ENCODE measurements at regions of chr1 and their contacts with region 1.

Region 1: DNA sequence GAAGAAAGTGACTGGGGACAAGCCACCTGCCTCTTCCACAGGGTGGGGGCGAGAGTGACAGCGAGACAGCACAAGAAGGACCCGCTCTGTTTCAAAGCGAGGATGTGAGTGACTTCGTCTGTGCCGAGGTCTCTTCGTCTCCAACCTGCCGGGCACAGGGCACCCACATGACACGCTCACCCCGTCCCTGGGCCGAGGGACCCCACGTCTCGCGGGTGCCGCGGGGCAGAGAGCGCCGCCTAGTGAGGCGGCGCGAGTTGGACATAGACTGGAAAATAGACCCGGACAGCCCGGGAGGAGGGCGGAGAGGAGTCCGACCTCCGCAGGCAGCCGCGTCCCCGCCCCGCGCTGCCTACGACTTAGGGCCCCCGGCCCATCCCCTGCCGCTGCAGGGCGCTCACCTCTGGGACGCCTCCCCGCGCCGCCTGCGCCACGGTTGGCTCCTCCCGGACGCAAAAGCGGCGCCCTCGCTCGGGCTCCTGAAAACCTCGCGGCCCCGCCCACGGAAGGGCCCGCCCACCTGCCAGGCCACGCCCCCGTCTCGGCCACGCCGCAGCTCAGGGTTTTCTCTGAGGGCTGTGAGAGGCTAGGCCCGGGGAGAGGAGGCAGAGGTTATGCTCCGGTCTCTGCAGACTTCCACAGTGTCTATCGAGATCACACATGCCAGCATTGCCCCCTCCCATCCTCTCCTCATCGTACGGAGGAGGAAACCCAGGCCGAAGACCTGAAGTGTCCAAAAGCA is at the start of gene TLR5:
- DNase-seq: peak; percentile 89
- H3K4me3 Mint-ChIP-seq: peak within 1 kb of the TSS; percentile 57
- H3K27ac Mint-ChIP-seq: no peak within 1 kb of the TSS
- H3K4me1 Mint-ChIP-seq: peaks cover 9% of the 10 kb centered on the region
- H3K27me3 Mint-ChIP-seq: peaks cover 19% of the 10 kb centered on the region
- total RNA-seq, gene TLR5: 0.15 to 0.23 TPM

Region 2: DNA sequence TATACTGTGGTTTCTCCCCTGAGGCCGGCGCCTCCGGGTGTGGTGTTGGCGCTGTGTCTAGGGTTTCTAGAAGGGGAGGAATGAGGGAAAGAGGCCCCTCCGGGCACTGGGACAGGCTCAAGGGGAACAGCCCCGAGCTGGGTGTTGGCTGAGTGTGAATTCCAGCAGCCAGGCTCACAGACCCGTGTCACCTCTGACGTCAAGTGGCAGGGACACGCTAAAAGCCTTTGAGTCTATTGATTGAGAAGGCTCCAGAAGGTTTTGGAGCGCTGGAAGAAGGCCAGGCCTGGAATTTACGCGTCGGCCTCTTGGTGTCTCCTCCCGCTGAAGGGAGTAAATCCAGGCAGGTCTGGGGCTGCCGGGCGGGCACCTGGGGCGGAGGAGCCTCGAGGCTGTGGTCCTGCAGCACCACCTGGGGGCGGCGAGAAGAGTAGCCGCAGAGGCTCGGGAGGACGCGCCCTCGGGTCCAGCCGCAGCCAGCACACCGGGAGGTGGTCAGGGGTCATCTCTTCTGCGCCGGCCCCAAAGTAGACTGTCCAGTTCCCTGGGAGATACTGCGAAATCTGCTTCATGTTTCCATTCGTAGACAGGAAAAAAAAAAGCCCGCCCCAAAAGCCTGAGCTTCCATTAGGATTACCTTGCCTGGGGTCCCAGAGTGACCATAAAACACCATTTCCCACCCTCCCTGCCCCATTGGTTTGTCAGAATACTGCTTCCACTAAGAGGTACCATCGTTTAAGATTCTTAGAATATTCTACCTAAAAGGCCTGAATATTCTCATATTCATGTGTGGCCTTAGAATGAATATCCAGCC is 61.6 kb before region 1 on chr1:
- CTCF ChIA-PET with region 1: no interaction called
- POLR2A ChIA-PET with region 1: no interaction called
- DNase-seq: peak; percentile 72
- H3K4me3 Mint-ChIP-seq: peak overlapping the region; percentile 19
- H3K27ac Mint-ChIP-seq: no peak overlapping the region
- H3K4me1 Mint-ChIP-seq: no peaks in the 10 kb centered on the region
- H3K27me3 Mint-ChIP-seq: peaks cover 4% of the 10 kb centered on the region

Region 3: DNA sequence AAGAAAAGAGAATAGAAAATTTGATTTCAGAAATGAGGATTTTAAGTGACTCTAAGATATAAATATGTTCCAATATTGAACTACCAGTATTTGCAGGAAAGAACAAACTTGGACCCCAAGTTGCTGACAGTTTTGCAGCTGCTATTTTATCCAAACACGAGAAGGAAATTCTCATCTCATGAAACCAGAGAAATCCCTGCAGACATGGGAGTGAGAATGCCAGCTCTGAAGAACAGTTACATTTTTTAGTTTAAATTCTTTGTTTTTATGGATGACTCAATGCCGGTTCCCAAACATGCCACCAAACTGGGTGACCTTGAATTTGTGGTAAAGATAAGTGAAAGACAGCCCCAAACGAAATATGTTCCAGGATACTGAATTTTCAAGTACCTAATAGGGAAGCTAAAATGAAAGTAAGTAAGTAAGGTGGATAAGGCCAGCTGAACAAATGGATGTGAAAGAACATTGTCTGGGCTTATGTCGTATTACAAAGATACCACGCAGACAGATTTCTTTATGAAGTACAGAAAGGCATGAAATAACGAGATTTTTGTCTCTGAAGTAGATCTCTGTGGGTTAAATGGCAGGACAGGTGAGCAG is 19.9 kb before region 1 on chr1:
- CTCF ChIA-PET with region 1: interaction called, 23 read pairs
- POLR2A ChIA-PET with region 1: no interaction called
- DNase-seq: no peak
- H3K4me3 Mint-ChIP-seq: no peak overlapping the region
- H3K27ac Mint-ChIP-seq: no peak overlapping the region
- H3K4me1 Mint-ChIP-seq: peaks cover 7% of the 10 kb centered on the region
- H3K27me3 Mint-ChIP-seq: peaks cover 7% of the 10 kb centered on the region